CD4-positive, alpha-beta memory T cell (primary cell): ENCODE measurements at regions of chr7 and their contacts with region 1.

Region 1: DNA sequence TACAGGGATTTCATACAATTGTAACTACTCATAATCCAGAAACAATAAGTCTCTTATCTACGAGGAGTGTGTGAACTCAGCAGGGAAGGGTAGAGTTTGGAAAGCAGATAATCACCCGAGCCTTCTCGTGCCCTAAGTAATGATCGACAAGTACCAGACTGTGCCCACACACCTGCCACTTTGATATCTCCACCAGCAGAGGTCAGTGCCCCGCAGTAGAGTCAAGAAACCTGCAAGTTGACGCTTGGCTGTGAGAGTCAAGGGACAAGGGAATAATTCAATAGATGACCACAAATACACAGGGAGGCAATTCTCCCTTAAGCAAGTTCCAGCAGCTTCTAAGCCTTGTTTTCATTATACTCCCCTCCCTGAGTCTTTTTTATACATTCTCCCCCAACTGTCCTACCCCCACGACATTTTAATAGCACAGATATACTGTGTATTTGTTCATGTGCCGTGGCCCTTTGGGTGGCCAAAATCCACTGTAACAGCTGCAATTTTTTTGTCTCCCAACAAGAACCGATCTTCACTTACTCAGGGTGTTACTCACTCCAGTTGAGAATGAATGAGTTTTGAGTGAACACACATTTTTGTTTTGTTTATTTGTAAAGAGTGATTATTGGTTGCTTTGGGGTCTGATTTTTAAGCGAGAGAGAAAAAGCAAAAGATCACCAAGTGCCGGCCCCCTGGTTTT is 106.9 kb upstream of the RHEB start:
- DNase-seq: peak in 3 of 5 donors; percentile 15 to 17 (median 16)
- H3K4me3 ChIP-seq: no peak overlapping the region
- H3K4me3 Mint-ChIP-seq: no peak overlapping the region
- H3K27ac ChIP-seq: no peak overlapping the region
- H3K27ac Mint-ChIP-seq: no peak overlapping the region
- H3K4me1 ChIP-seq: peaks cover 12% of the 10 kb centered on the region
- H3K4me1 Mint-ChIP-seq: peaks cover 31 to 46% (median 37%) of the 10 kb centered on the region in 4 donors
- H3K27me3 ChIP-seq: no peaks in the 10 kb centered on the region
- H3K27me3 Mint-ChIP-seq: no peaks in the 10 kb centered on the region

Region 2: GRCh38 chr7:151759591-151760042 is 133.0 kb after region 1 on chr7:
- CTCF ChIA-PET with region 1: interaction called, 7 read pairs
- POLR2A ChIA-PET with region 1: no interaction called
- intact Hi-C with region 1: loop called (anchors 1 kb)
- DNase-seq: peak; percentile 50 to 59 (median 58)
- H3K4me3 ChIP-seq: no peak overlapping the region
- H3K4me3 Mint-ChIP-seq: no peak overlapping the region
- H3K27ac ChIP-seq: no peak overlapping the region
- H3K27ac Mint-ChIP-seq: peak overlapping the region in 6 of 7 donors; percentile 41 to 79 (median 56)
- H3K4me1 ChIP-seq: peaks cover 19% of the 10 kb centered on the region
- H3K4me1 Mint-ChIP-seq: peaks cover 9 to 37% (median 29%) of the 10 kb centered on the region in 4 donors
- H3K27me3 ChIP-seq: no peaks in the 10 kb centered on the region
- H3K27me3 Mint-ChIP-seq: no peaks in the 10 kb centered on the region